GM12878 (cell line): ENCODE measurements at regions of chr15 and their contacts with region 1.

Region 1: GRCh38 chr15:38440353-38441129 is 13.4 kb upstream of the FAM98B start:
- DNase-seq: peak; percentile 44
- ATAC-seq: peak; percentile 92
- H3K4me3 ChIP-seq: no peak overlapping the region
- H3K27ac ChIP-seq: no peak overlapping the region
- H3K4me1 ChIP-seq: peaks cover 8% of the 10 kb centered on the region
- H3K27me3 ChIP-seq: peaks cover 0 to 3% of the 10 kb centered on the region in 2 experiments; a peak in 2 of 4 replicates
- CTCF ChIP-seq: peak; percentile 90 to 94 (median 91)
- EP300 ChIP-seq: no peak
- POLR2A ChIP-seq: no peak
- RAD21 ChIP-seq: peak; percentile 96

Region 2: GRCh38 chr15:37995461-37996347 is 444.8 kb before region 1 on chr15:
- CTCF ChIA-PET with region 1: interaction called, 10 read pairs
- POLR2A ChIA-PET with region 1: no interaction called
- RAD21 ChIA-PET with region 1: interaction called, 9 read pairs
- SMC1A ChIA-PET with region 1: interaction called, 9 read pairs
- in situ Hi-C with region 1: no loop called
- intact Hi-C with region 1: no loop called
- DNase-seq: peak; percentile 26
- ATAC-seq: peak; percentile 93
- H3K4me3 ChIP-seq: no peak overlapping the region
- H3K27ac ChIP-seq: no peak overlapping the region
- H3K4me1 ChIP-seq: no peaks in the 10 kb centered on the region
- H3K27me3 ChIP-seq: no peaks in the 10 kb centered on the region; a peak in 1 of 4 replicates
- CTCF ChIP-seq: peak; percentile 49 to 78 (median 54); a peak in 5 of 6 replicates
- EP300 ChIP-seq: no peak
- POLR2A ChIP-seq: no peak
- RAD21 ChIP-seq: peak; percentile 91

Region 3: DNA sequence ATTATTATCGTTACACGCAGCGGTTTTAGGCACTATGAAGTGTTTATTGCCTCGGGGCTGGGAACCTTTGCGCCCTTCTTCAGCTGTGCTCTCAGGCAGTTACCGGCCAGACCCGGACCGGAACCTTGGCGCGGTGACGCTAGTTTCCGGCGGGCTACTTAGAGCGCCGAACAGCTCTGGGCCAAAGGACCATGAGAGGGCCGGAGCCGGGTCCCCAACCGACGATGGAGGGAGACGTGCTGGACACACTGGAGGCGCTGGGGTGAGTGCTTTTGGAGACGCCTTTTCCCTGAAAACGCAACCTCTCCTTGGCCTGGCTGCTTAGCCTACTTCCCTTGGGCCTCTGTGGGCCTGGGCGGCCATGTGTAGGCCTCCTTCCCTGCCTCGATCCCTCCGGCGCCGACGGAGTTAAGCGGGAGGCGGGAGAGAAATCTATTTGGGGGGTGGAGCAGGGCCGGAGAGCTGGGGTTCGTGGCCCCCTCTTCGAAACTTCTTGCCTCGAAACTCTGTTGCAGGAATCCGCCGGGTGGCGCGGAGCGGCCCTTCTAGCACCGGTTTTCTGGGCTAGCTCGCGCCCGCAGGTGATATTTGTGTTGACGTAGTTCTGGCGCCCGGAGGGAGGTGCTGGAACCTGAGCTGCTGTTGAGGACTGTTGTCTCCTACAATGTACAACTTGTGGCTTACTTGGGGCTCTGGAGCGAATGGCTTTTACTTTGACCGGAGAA is 13.6 kb after region 1 on chr15 and contains the start of gene FAM98B:
- CTCF ChIA-PET with region 1: interaction called, 59 read pairs
- POLR2A ChIA-PET with region 1: interaction called, 22 read pairs
- RAD21 ChIA-PET with region 1: interaction called, 44 read pairs
- SMC1A ChIA-PET with region 1: interaction called, 51 read pairs
- in situ Hi-C with region 1: no loop called
- intact Hi-C with region 1: no loop called
- DNase-seq: peak; percentile 62
- ATAC-seq: peak; percentile 93
- H3K4me3 ChIP-seq: peak within 1 kb of the TSS; percentile 84
- H3K27ac ChIP-seq: peak within 1 kb of the TSS; percentile 85
- H3K4me1 ChIP-seq: no peaks in the 10 kb centered on the region
- H3K27me3 ChIP-seq: no peaks in the 10 kb centered on the region
- CTCF ChIP-seq: no peak
- EP300 ChIP-seq: no peak; a peak in 1 of 4 replicates
- POLR2A ChIP-seq: peak; percentile 94
- RAD21 ChIP-seq: no peak
- polyA plus RNA-seq, gene FAM98B: 4.2 to 8.4 TPM

Region 4: GRCh38 chr15:38479266-38479665 is 38.7 kb after region 1 on chr15:
- CTCF ChIA-PET with region 1: interaction called, 34 read pairs
- POLR2A ChIA-PET with region 1: no interaction called
- RAD21 ChIA-PET with region 1: interaction called, 13 read pairs
- SMC1A ChIA-PET with region 1: interaction called, 32 read pairs
- in situ Hi-C with region 1: no loop called
- intact Hi-C with region 1: loop called (anchors 2 kb)
- DNase-seq: no peak
- ATAC-seq: no peak
- H3K4me3 ChIP-seq: no peak overlapping the region
- H3K27ac ChIP-seq: no peak overlapping the region
- H3K4me1 ChIP-seq: no peaks in the 10 kb centered on the region
- H3K27me3 ChIP-seq: no peaks in the 10 kb centered on the region
- CTCF ChIP-seq: no peak
- EP300 ChIP-seq: no peak
- POLR2A ChIP-seq: no peak
- RAD21 ChIP-seq: no peak

Region 5: DNA sequence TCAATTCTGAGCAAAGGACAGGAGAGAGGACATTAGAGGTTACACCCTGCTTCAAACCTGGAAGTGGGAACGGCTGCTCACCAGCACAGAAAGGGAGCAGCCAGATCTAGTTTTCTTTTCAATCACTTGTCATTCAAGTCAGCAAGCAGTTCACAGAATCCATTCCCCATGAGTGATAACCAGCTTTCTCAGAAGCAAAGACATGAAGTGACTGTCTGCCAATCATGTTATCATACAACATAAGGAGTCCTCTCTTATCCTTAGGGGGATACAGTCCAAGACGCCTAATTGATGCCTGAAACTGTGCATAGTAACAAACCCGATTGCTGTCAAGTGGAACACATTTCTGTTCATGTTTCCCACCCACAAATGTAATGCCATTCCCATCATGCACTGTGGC is 68.1 kb after region 1 on chr15:
- CTCF ChIA-PET with region 1: interaction called, 12 read pairs
- POLR2A ChIA-PET with region 1: interaction called, 5 read pairs
- RAD21 ChIA-PET with region 1: interaction called, 6 read pairs
- SMC1A ChIA-PET with region 1: interaction called, 8 read pairs
- in situ Hi-C with region 1: no loop called
- intact Hi-C with region 1: loop called (anchors 5 kb)
- DNase-seq: peak; percentile 47
- ATAC-seq: peak; percentile 68
- H3K4me3 ChIP-seq: no peak overlapping the region
- H3K27ac ChIP-seq: peak overlapping the region; percentile 50
- H3K4me1 ChIP-seq: peaks cover 11% of the 10 kb centered on the region
- H3K27me3 ChIP-seq: no peaks in the 10 kb centered on the region
- CTCF ChIP-seq: no peak
- EP300 ChIP-seq: no peak
- POLR2A ChIP-seq: no peak
- RAD21 ChIP-seq: no peak

Region 6: DNA sequence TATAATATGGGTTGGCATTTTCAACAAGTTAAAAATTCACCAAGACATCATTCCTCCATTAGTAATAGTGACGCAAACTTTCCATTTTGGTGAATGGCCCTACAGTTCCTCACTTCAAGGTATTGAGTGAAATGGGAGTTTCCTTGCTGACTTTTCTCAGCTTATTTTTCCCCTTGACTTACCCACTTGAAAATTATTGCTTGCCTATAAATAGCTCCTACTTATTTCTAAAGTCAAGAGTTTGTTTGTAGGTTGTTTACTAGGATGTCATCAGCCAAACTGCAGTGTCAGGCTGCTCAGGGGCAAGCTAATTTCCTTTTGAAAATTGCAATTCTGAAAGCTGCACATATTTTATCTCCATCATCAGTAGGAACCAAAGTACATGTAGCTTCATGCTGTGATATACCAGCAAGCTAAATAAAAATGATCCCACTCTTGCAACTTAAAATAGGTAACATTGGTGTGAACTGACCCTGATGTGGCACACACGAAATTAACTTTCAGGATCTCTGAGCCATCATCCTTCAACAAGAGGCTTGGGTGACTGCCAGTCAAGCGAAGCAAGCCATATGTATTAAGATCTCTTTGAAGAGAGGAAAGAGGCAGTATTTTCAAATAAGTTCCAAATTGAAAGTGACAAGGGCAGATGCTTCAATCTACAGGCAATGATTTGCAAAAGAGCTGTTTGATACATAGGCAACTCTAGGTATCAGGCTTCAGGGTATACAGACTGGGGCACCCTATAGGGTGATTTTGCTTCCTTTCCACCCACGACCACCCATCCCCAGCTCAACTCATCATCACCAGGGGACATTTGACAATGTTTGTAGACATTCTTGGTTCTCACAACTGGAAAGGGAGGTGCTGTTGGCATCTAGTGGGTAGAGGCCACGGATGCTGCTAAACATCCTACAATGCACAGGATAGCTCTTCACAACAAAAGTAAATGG is 190.9 kb after region 1 on chr15:
- CTCF ChIA-PET with region 1: interaction called, 4 read pairs
- POLR2A ChIA-PET with region 1: no interaction called
- RAD21 ChIA-PET with region 1: interaction called, 13 read pairs
- SMC1A ChIA-PET with region 1: interaction called, 3 read pairs
- in situ Hi-C with region 1: no loop called
- intact Hi-C with region 1: no loop called
- DNase-seq: no peak
- ATAC-seq: peak; percentile 77
- H3K4me3 ChIP-seq: no peak overlapping the region
- H3K27ac ChIP-seq: no peak overlapping the region; the same call in 1 of the 2 replicates
- H3K4me1 ChIP-seq: no peaks in the 10 kb centered on the region
- H3K27me3 ChIP-seq: no peaks in the 10 kb centered on the region
- CTCF ChIP-seq: no peak
- EP300 ChIP-seq: no peak; a peak in 2 of 4 replicates
- POLR2A ChIP-seq: no peak
- RAD21 ChIP-seq: no peak

Region 7: DNA sequence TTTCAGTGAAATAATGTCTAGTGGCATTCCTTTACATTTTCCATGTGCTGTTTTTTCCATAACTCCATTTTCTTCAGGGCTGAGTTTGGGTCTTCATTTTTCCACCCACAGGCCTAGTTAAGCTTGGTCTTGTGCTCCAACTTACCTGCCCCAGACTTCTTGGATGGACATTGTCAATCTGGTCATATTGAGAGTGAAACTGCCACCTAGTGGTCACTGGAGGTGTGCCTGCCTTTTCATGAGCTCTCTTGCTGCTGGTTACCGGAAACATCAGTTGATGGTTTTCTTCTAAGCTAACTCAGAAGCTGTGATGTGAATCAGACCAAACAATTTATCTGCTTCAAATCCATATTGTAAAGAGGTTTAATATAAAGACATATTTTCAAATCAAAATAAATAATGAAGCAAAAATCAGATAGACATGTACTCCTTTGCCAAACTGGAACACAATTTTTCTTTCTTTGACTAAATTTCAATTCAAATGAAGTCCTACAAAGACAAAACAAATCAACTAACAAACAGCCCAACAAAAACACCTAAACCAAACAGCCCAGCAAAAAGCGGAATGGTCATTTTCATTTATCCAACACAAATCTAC is 259.2 kb after region 1 on chr15:
- CTCF ChIA-PET with region 1: interaction called, 386 read pairs
- POLR2A ChIA-PET with region 1: interaction called, 5 read pairs
- RAD21 ChIA-PET with region 1: interaction called, 224 read pairs
- SMC1A ChIA-PET with region 1: interaction called, 153 read pairs
- in situ Hi-C with region 1: loop called (anchors 10 kb)
- intact Hi-C with region 1: loop called (anchors 1 kb)
- DNase-seq: no peak
- ATAC-seq: peak; percentile 68
- H3K4me3 ChIP-seq: no peak overlapping the region
- H3K27ac ChIP-seq: no peak overlapping the region
- H3K4me1 ChIP-seq: peaks cover 19% of the 10 kb centered on the region
- H3K27me3 ChIP-seq: no peaks in the 10 kb centered on the region
- CTCF ChIP-seq: peak; percentile 85 to 92 (median 87)
- EP300 ChIP-seq: no peak
- POLR2A ChIP-seq: no peak
- RAD21 ChIP-seq: peak; percentile 79